AG04450 (cell line): ENCODE measurements at regions of chr21 and their contacts with region 1.

Region 1: DNA sequence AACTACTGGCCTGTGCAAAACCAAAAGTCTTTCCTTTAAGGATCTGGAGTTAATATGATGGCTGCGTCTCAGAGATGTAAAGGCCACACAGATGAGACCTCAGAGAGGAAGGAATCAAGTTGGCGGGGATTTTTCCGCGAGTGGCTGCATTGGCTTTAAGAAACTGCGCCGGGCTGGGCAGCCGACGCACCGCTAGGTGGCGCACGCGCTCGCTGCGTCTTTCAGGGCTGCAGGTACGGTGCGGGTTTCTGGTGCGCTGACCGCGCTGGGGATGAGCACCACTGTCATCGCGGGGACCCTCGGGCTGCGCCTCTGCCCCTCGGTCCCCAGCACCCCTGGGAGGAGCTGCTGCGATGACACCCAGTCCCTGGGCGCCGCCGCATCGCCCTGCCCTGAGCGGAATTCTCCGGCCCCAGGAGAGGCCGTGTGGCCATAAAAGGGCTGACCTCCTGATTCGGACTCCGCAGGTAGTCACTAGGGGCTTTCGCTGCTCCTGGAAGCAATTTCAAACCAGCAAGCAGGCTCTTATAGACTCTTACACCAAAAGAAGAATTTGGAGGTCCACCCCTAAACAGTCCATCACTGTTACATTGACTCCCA is 241.0 kb downstream of the KCNJ6 start:
- DNase-seq: no peak
- H3K4me3 ChIP-seq: no peak overlapping the region
- H3K27ac ChIP-seq: no peak overlapping the region
- H3K27me3 ChIP-seq: peaks cover 18% of the 10 kb centered on the region
- CTCF ChIP-seq: peak; percentile 90

Region 2: DNA sequence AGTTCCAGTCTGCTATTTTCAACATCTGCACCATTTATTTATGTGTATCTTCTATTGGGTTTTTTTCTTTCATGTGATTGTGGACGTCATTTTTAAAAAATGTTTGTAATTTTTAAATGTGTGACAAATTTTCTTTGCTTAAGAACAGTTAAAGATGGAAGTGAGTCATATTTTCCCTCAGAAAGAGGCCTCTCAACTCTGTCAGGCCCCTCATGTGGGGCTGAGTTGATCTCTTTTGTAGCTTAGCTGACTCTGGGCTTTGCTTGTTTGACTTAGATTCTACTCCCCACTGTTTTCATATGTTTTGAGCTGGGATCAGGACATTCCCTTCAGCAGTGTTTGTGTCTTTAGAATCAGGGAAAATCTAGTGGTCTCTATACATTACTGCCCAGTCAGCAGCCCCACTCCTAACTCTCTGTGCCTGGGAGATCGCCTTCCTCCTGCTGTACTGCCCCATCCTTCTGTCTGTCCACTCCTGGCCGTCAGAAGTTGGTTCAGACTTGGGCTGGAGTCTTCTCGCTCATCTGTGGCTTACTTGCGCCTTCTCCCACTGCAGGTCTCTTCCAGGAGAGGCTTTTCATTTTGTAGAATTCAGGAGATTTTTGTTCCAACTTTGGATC is 171.3 kb before region 1 on chr21:
- CTCF ChIA-PET with region 1: no interaction called
- POLR2A ChIA-PET with region 1: no interaction called
- DNase-seq: peak; percentile 43
- H3K4me3 ChIP-seq: no peak overlapping the region
- H3K27ac ChIP-seq: peak overlapping the region; percentile 82
- H3K27me3 ChIP-seq: no peaks in the 10 kb centered on the region
- CTCF ChIP-seq: no peak

Region 3: DNA sequence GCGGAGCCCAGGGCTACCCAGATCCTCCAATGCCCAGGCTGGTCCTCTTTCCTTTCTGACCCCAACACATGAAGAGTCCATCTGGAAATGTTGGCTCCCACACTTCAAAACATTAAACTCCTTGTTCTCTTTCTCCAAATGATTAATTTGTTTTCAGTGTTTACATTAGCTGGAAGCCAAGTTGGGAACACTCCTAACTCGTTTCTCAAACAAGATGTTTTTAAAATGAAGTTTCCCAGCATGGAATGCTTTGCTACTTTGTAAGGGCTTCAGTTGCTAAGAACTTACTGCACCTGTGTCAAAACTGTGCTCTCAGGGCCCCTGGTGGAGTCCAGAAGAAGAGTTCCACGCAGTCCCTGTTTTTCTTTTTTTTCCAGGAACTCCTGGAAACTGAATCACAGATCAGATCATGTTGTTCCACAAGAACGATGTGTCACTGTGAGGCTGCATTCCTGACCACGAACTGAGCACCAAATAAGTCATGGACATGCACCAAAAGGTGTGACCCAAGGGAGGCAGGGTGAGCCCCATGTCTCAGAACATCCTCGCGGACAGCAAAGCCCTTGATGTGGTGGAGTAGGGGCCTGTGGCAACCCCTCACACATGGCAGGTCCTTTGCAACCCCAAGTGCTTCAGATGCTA is 16.4 kb before region 1 on chr21:
- CTCF ChIA-PET with region 1: interaction called, 16 read pairs
- POLR2A ChIA-PET with region 1: no interaction called
- DNase-seq: peak; percentile 21
- H3K4me3 ChIP-seq: no peak overlapping the region
- H3K27ac ChIP-seq: no peak overlapping the region
- H3K27me3 ChIP-seq: peaks cover 6% of the 10 kb centered on the region
- CTCF ChIP-seq: peak; percentile 30; the same call in 1 of the 2 replicates

Region 4: GRCh38 chr21:37686991-37687810 is 11.9 kb after region 1 on chr21:
- CTCF ChIA-PET with region 1: interaction called, 14 read pairs
- POLR2A ChIA-PET with region 1: no interaction called
- DNase-seq: no peak
- H3K4me3 ChIP-seq: no peak overlapping the region
- H3K27ac ChIP-seq: no peak overlapping the region
- H3K27me3 ChIP-seq: peaks cover 22% of the 10 kb centered on the region
- CTCF ChIP-seq: no peak

Region 5: DNA sequence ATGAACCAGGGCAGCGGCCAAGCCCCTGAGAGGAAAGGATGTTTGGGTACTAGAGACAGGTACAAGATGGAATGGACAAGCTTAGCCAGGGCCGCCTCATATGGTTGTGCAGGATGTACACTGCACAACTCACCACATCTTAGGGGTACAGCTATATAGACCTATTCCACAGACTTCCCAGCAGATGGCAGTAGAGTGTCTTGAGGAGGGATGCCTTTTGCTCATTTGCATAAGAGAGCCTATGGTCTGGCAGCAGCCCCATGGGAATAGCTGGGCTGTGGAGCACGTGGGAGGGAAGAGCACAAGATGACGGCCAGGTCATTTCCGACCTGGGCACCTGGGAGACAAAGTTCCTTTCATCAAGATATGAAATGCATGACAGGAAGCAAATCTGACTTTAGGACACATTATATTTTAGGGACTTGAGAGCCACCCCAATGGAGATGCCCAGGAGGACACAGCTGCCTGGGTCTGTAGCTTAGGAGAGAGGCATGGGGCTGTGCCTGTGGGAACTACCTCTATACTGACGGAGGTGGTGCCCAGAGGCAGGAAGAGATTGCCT is 25.4 kb after region 1 on chr21:
- CTCF ChIA-PET with region 1: interaction called, 11 read pairs
- POLR2A ChIA-PET with region 1: no interaction called
- DNase-seq: peak; percentile 61
- H3K4me3 ChIP-seq: no peak overlapping the region
- H3K27ac ChIP-seq: no peak overlapping the region
- H3K27me3 ChIP-seq: peaks cover 22% of the 10 kb centered on the region
- CTCF ChIP-seq: peak; percentile 86

Region 6: DNA sequence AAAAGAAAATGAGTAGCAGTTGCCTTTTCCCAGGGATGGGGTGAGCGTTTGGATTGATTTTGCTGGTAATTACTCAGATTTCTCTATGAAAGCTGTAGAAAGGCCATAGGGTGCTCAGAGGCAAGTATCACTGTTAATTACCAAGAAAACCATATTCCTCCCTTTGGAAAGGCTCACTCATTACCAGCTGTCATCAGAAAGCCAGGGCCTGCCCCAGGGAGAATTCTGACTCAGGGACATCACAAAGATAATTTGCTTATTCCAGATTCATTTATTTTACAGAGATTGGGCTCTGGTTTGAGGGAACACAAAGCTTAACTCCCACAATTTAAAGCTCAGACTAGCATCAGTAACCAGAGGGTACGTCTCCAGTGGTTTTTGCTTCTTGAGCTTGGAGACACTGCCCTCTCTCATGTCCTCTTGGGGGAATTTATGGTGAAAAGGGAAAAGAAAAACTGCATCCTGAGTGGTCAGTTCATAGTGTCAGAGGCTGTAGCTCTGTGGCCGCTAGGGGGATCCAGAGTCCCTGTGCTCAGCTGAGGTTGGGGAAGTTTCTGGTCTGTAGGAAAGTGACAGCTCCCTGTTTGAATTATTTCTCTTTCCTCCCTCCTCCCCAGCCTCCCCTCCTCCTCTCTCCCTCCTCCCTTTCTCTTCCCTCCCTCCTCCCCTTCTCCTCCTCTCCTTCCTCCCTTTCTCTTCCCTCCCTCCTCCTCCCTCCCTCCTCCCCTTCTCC is 36.7 kb after region 1 on chr21:
- CTCF ChIA-PET with region 1: interaction called, 10 read pairs
- POLR2A ChIA-PET with region 1: no interaction called
- DNase-seq: peak; percentile 30
- H3K4me3 ChIP-seq: no peak overlapping the region
- H3K27ac ChIP-seq: no peak overlapping the region
- H3K27me3 ChIP-seq: peaks cover 7% of the 10 kb centered on the region
- CTCF ChIP-seq: peak; percentile 99

Region 7: DNA sequence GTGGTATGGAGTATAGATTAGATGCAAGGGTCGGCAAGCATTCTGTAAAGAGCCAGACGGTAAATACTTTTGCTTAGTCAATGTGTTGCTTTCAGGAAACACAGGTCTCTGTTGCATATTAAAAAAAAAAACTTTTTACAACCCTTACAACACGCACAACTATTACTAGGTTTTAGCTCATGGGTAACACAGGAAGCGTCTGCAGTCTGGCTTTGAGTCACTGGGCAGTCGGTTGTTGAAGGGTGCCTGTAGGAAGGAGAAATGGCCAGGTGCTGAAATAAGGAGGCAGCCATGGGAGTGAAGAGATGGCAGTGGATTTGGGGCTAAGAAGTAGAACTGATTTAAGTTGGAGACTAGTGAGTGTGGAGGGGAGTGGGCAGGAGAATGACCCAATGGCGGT is 48.9 kb after region 1 on chr21:
- CTCF ChIA-PET with region 1: no interaction called
- POLR2A ChIA-PET with region 1: no interaction called
- DNase-seq: no peak
- H3K4me3 ChIP-seq: no peak overlapping the region
- H3K27ac ChIP-seq: no peak overlapping the region
- H3K27me3 ChIP-seq: peaks cover 4% of the 10 kb centered on the region
- CTCF ChIP-seq: no peak

Region 8: DNA sequence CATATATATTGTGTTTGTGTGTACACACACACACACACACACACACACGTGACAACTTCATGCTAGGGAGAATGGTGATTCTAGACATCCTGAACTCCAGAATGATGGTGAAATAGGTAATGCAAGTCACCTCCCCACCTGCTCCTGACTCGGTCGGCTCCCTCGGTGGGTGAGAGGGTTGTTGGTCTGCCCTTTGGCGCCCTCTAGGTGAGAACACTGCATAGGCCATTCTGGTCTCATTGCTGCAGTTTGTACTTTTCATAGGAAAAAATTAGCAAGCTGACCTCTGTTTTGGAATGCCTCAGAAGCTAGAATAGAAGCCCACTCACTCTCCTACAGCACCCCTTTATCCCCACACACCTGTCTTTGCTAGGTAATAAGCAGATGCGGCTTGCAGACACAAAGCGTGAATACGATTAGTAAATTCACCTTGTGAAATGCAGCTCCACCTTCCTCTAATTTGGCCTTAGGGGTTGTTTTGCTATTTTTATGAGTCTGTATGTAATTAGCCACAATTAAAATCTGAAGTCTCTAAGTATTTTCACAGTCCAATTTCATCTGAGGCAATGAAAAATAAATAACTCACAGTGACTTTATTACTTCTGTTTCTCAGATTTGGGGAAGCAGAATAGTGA is 451.5 kb after region 1 on chr21:
- CTCF ChIA-PET with region 1: interaction called, 13 read pairs
- POLR2A ChIA-PET with region 1: no interaction called
- DNase-seq: no peak
- H3K4me3 ChIP-seq: no peak overlapping the region
- H3K27ac ChIP-seq: no peak overlapping the region
- H3K27me3 ChIP-seq: peaks cover 16% of the 10 kb centered on the region
- CTCF ChIP-seq: peak; percentile 85